ENCODE measurements at regions of chr12 and their contacts with region 1.

Region 1: GRCh38 chr12:11648831-11649702 is at the start of gene ETV6:
- DNase-seq: peak; percentile 68 to 82
- ATAC-seq: peak; percentile 53 to 82 (median 71)
- H3K4me3 ChIP-seq: peak within 1 kb of the TSS; percentile 56 to 94 (median 88)
- H3K27ac ChIP-seq: peak within 1 kb of the TSS; percentile 92 to 99 (median 98)
- H3K4me1 ChIP-seq: peaks cover 6 to 37% (median 30%) of the 10 kb centered on the region in 9 donors
- H3K27me3 ChIP-seq: no peaks in the 10 kb centered on the region
- CTCF ChIP-seq: peak in 1 of 9 donors; percentile 24
- total RNA-seq, gene ETV6: 8.5 to 33.5 (median 15.9) TPM

Region 2: GRCh38 chr12:11711651-11712327 is 62.7 kb after region 1 on chr12:
- intact Hi-C with region 1: loop called in 5 of 10 experiments (anchors 5 to 10 kb)
- DNase-seq: no peak
- ATAC-seq: peak in 1 of 8 donors; percentile 18
- H3K4me3 ChIP-seq: no peak overlapping the region
- H3K27ac ChIP-seq: peak overlapping the region in 5 of 10 donors; percentile 7 to 76 (median 10)
- H3K4me1 ChIP-seq: peaks cover 5 to 88% (median 45%) of the 10 kb centered on the region in 9 donors
- H3K27me3 ChIP-seq: no peaks in the 10 kb centered on the region
- CTCF ChIP-seq: no peak

Region 3: GRCh38 chr12:11765817-11766794 is 117.0 kb after region 1 on chr12:
- intact Hi-C with region 1: loop called in 2 of 10 experiments (anchors 5 to 10 kb)
- DNase-seq: peak in 1 of 2 donors; percentile 67
- ATAC-seq: peak; percentile 59 to 85 (median 78)
- H3K4me3 ChIP-seq: peak overlapping the region in 4 of 10 donors; percentile 5 to 21 (median 12)
- H3K27ac ChIP-seq: peak overlapping the region; percentile 5 to 94 (median 80)
- H3K4me1 ChIP-seq: peaks cover 8 to 100% (median 66%) of the 10 kb centered on the region in 9 donors
- H3K27me3 ChIP-seq: no peaks in the 10 kb centered on the region
- CTCF ChIP-seq: no peak

Region 4: DNA sequence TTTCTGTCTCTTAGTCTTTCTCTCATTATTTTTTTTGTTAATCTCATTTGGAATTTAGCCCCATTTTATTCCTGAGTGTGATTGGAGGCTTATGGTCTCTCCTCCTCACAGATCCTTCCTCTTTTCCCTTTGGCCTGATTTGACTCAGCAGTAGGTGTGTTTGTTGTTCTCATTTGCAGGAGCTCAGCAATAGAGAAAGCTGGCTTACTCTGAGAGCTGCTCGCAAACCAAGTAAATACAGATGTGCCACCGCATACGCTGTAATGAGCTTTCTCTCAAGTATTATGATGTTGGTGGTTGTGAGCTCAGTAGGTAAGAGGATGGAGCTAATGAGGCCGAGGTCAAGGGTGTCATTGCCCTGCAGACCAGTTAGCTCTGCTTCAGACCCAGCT is 206.9 kb after region 1 on chr12:
- intact Hi-C with region 1: loop called in 5 of 10 experiments (anchors 5 to 10 kb)
- DNase-seq: no peak
- ATAC-seq: no peak
- H3K4me3 ChIP-seq: no peak overlapping the region
- H3K27ac ChIP-seq: peak overlapping the region in 2 of 10 donors; percentile 41 to 85
- H3K4me1 ChIP-seq: peaks cover 0 to 53% (median 28%) of the 10 kb centered on the region in 9 donors
- H3K27me3 ChIP-seq: no peaks in the 10 kb centered on the region
- CTCF ChIP-seq: no peak

Region 5: DNA sequence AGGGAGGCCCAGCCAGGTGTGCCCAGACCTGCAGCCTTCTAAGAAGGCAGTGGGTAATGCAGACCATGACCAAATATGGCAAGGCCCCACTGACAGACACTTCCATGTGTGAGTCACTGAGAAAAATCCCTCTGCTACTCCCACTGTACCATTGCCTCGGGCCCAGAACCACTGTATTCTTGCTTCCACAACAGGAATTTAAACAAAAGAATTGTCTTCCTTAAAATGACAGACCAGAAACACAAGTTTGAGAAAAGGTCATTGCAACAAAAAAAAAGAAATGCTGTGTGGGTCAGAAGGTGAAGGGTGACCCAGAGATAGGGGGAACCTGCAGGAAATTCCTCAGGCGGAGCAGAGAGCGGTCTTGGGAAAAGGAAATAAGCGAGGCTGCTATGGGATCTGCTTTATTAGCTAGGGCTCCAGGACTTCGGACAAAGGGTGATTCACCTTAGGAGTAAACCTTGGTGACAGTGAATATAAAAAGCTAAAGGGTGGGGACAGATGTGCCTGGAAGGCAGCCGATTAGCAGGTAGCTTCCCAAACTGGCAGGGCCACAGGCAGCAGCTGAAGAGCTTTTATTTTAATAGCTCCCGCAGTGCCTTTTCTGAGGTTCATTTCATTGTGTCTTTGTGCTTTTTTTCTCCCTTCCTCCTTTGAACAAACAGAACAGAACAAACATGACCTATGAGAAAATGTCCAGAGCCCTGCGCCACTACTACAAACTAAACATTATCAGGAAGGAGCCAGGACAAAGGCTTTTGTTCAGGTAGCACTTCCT is 236.4 kb after region 1 on chr12:
- intact Hi-C with region 1: loop called in 3 of 10 experiments (anchors 2 to 10 kb)
- DNase-seq: no peak
- ATAC-seq: peak; percentile 40 to 88 (median 80)
- H3K4me3 ChIP-seq: no peak overlapping the region
- H3K27ac ChIP-seq: peak overlapping the region; percentile 23 to 86 (median 67)
- H3K4me1 ChIP-seq: peaks cover 6 to 48% (median 21%) of the 10 kb centered on the region in 9 donors
- H3K27me3 ChIP-seq: no peaks in the 10 kb centered on the region
- CTCF ChIP-seq: no peak